ENCODE measurements at regions of chr10 and their contacts with region 1.

Region 1: DNA sequence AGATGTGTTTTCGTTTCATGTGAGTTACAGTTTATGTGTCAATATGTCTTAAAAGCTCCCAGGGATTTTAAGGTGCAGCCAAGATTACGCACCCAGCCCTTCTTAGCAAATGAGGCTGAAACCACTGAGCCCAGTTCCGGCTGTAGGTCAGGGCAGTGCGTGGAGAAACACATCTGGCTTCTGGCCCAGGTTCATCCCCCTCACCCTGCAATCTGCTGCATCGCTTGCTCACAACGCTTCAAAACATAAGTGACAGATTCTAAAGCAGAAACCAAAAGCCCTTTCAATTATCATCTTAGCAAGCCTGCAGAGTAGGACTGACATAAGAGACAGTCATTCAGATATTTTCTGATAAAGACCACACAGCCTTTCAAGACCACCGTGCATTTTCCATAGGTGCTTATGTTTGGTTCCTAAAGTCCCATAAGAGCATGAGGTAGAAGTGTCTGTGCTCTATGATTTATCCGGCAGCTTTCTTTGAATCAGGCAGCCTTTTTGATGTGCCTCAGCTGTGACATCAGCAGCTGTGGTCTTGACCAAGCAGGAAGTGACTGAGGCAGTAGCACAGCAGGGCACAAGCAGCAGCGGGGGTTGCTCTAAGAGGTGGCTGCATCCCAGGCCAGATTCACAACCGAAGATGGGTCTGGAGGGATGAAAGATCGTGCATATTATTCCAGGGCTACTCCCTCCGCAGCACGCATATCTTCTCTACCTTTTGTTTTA is 72.1 kb upstream of the LYZL2 start:
- DNase-seq: peak; percentile 94
- H3K4me3 Mint-ChIP-seq: peak overlapping the region; percentile 57
- H3K27ac Mint-ChIP-seq: peak overlapping the region; percentile 98
- H3K4me1 Mint-ChIP-seq: peaks cover 90% of the 10 kb centered on the region
- H3K27me3 Mint-ChIP-seq: no peaks in the 10 kb centered on the region

Region 2: DNA sequence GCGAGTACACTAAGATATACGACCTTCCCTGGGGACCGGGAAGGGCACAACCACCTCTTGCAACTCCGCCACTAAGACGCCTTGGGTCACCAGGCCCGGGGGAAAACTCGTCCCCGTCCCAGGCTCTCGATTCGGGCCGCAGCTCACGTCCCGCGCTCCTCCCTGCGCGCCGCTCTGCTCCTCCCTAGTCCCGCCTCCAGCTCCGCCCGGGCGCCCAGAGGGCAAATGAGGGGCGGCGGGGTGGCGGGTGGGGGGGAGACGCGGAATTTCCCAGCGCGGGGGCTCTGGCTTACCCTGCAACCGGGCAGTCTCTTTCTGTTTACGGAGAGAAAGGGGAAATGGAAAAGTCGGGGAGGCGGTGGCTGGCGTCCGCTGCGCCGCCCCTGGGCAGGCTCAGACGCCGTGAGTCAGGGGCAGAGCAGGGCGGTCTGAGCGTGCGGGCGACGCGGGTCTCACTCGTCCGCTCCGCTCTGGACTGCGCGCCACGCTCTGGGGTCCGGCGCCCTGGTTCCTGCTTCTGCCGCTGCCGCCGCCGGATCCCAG is 267.8 kb before region 1 on chr10 and contains the start of gene MAP3K8:
- CTCF ChIA-PET with region 1: no interaction called
- POLR2A ChIA-PET with region 1: interaction called, 5 read pairs
- intact Hi-C with region 1: loop called (anchors 1 kb)
- DNase-seq: peak; percentile 93
- H3K4me3 Mint-ChIP-seq: peak within 1 kb of the TSS; percentile 92
- H3K27ac Mint-ChIP-seq: peak within 1 kb of the TSS; percentile 95
- H3K4me1 Mint-ChIP-seq: peaks cover 49% of the 10 kb centered on the region
- H3K27me3 Mint-ChIP-seq: no peaks in the 10 kb centered on the region
- total RNA-seq, gene MAP3K8: 36.5 to 40.6 TPM

Region 3: DNA sequence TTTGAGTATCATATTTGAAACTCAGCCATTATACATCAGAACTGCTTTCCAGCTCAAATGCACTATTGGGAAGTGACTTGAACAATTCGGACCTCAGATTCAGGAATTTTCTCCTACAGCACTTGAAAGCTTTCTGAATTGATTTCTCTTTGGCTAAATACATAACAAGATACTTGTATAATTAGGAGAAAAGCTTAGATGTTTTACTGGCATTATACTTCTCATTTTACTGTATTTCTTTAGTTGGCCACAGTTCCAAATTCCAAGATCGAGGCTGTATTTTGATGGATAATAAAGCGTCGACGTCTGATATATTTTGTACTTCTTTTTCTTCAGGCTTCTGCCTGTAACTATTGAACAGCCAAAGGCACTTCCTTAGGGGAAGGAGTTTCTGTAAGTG is 45.4 kb before region 1 on chr10:
- CTCF ChIA-PET with region 1: no interaction called
- POLR2A ChIA-PET with region 1: no interaction called
- intact Hi-C with region 1: no loop called
- DNase-seq: no peak
- H3K4me3 Mint-ChIP-seq: no peak overlapping the region
- H3K27ac Mint-ChIP-seq: no peak overlapping the region
- H3K4me1 Mint-ChIP-seq: peaks cover 4% of the 10 kb centered on the region
- H3K27me3 Mint-ChIP-seq: peaks cover 35% of the 10 kb centered on the region

Region 4: GRCh38 chr10:30671026-30671616 is 30.5 kb before region 1 on chr10:
- CTCF ChIA-PET with region 1: interaction called, 14 read pairs
- POLR2A ChIA-PET with region 1: interaction called, 7 read pairs
- intact Hi-C with region 1: no loop called
- DNase-seq: no peak
- H3K4me3 Mint-ChIP-seq: peak overlapping the region; percentile 49
- H3K27ac Mint-ChIP-seq: peak overlapping the region; percentile 52
- H3K4me1 Mint-ChIP-seq: peaks cover 31% of the 10 kb centered on the region
- H3K27me3 Mint-ChIP-seq: peaks cover 17% of the 10 kb centered on the region

Region 5: DNA sequence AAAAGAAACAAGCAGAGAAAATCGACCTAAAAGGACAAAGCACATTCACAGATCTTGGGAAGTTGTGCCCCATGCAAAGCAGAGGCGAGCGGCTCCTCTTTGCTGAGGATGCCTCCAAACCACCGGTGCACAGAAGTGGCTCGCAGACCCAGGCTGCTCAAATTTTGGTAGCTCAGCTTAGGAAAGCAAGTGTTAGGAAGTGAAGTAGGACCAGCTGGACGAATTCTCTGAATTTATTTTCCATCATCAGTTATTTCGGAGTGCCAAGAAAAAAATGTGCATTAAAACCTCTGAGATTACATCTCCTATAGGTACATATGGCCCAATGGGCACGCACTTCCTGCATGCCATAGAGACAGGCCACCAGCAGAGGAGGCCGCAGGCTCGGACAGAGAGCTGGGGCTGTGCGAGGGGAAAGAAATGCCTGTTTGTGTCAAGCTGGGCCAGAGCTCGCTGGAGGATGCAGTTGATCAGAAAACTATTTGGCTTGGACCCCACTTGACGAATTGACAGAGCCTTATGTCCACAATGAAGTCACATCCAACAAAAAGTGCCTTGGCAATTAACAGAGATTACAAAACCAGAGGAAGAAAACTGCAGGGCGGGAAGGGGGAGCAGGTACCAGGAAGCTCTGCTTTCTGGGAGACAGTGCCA is 50.2 kb after region 1 on chr10:
- CTCF ChIA-PET with region 1: no interaction called
- POLR2A ChIA-PET with region 1: no interaction called
- intact Hi-C with region 1: loop called (anchors 2 kb)
- DNase-seq: peak; percentile 77
- H3K4me3 Mint-ChIP-seq: no peak overlapping the region
- H3K27ac Mint-ChIP-seq: peak overlapping the region; percentile 24
- H3K4me1 Mint-ChIP-seq: peaks cover 41% of the 10 kb centered on the region
- H3K27me3 Mint-ChIP-seq: peaks cover 3% of the 10 kb centered on the region

Region 6: DNA sequence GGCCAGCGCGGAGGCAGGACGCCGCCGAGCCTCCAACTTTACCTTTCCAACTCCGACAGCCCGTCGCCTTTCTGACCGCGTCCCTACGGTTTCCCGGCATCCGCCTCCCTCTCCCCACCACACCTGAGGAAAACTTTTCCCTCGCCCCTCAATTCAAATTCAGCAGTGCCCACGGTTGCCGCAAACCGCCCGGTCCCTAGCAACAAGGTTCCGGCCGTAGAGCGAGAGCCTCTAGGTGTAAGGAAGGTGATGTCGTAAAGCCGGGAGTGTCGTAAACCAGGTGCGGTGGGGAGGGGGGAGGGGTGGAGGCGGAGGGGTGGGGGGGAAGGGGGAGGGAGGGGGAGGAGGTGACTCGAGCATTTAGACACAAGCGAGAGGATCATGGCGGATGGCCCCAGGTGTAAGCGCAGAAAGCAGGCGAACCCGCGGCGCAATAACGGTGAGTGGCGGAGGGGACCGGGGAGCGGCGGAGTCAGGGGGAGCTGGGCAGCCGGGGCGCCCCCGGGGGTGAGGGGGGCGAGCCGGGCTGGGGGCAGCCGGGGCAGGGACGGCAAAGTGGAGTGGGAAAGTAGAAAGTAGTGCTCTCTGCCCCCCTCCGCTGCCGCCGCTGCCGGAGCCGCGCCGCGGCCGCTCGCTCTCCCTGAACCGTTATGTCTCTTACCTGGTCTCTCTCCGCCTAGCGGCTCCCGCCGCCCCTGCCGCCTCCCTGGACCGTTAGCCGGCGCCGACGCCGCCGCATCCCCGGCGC is 617.4 kb after region 1 on chr10 and contains the start of gene ZEB1:
- CTCF ChIA-PET with region 1: no interaction called
- POLR2A ChIA-PET with region 1: no interaction called
- intact Hi-C with region 1: loop called (anchors 2 kb)
- DNase-seq: peak; percentile 94
- H3K4me3 Mint-ChIP-seq: peak within 1 kb of the TSS; percentile 98
- H3K27ac Mint-ChIP-seq: peak within 1 kb of the TSS; percentile 99
- H3K4me1 Mint-ChIP-seq: peaks cover 32% of the 10 kb centered on the region
- H3K27me3 Mint-ChIP-seq: no peaks in the 10 kb centered on the region
- total RNA-seq, gene ZEB1: 33.9 to 37.8 TPM

Region 7: GRCh38 chr10:31928549-31929260 is 1227.1 kb after region 1 on chr10 and contains the start of gene ARHGAP12:
- CTCF ChIA-PET with region 1: no interaction called
- POLR2A ChIA-PET with region 1: no interaction called
- intact Hi-C with region 1: loop called (anchors 10 kb)
- DNase-seq: peak; percentile 87
- H3K4me3 Mint-ChIP-seq: peak within 1 kb of the TSS; percentile 81
- H3K27ac Mint-ChIP-seq: peak within 1 kb of the TSS; percentile 51
- H3K4me1 Mint-ChIP-seq: peaks cover 42% of the 10 kb centered on the region
- H3K27me3 Mint-ChIP-seq: no peaks in the 10 kb centered on the region
- total RNA-seq, gene ARHGAP12: 4.0 to 4.5 TPM

Measured in activated CD4-positive, alpha-beta memory T cell treated with anti-CD3 and anti-CD28 coated beads for 36 hours (primary cell).